Posterior cingulate gyrus (tissue), 11 donors: ENCODE measurements at regions of chr1 and their contacts with region 1.

Region 1: DNA sequence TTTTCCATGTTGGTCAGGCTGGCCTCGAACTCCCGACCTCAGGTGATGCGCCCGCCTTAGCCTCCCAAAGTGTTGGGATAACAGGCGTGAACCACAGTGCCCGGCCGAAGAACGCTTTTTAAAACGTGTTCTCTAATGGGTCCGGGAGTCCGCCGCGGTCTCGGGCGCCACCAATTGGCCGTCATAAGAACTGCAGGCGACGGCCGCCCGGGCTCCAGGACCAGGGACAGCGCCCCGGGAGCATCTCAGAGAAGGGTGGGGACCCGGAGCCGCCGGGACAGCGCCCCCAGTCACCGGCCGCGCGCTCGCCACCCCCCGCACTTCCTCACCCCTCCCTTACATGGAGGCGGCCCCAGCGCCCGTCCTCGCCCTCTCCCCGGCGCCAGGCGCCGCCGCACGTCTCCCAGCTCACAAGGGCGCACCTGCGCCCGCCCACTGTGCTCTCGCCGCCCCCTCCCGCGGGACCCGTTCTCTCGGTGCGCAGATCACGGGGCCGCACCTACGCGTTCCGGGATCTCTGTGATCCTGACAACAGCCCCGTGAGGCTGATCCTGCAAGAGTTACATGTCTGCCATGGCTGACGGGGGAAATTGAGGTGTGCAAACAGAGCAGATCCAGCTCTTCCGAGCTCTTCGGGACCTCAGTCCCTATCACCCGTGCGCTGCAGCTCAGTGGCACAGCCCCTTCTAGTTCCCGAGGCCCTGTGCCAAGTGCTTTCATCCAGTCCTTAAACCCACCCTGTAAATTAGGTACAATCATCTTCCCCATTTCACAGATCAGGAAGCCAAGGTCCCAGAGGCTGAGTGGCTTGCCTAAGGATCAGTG is 9.8 kb downstream of the RAP1GAP start:
- DNase-seq: peak in 9 of 10 donors; percentile 72 to 97 (median 82)

Region 2: GRCh38 chr1:21232044-21232443 is 427.3 kb before region 1 on chr1:
- intact Hi-C with region 1: loop called (anchors 2 kb)
- DNase-seq: peak in 6 of 10 donors; percentile 24 to 64 (median 36)

Region 3: DNA sequence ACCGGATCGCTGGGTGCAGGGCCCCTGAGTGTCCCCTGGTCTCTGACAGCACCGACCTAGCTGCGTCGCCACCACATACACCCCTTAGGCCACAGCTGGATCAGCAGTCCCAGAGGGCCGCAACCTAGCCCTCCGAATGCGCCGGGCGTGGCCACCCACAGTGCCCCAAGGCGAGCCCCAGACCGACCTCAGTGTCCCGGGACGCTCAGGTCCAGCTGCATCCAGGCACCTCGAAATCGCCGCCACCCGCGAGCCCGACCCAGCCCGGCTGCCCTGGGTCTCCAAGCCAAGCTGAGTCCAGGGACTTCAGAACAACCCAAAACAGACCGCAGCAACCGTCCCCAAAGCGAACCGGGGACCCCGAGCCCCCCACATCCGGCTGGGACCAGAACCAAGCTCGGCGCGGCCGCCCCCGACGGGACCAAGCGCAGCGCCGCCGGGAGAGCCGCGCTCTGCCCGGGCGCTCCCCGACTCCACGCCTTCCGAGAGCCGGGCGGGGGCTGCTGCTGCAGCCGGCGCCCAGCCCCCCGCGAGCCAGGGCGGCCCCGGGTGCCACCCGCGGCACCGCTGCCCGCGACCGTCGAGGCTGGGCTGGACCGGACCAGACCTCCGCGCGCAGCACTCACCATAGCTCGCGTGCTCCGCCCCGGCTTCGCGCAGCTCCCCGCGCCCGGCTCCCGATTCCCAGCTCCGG is 314.4 kb before region 1 on chr1:
- intact Hi-C with region 1: loop called (anchors 10 kb)
- DNase-seq: peak in 1 of 10 donors; percentile 37

Region 4: DNA sequence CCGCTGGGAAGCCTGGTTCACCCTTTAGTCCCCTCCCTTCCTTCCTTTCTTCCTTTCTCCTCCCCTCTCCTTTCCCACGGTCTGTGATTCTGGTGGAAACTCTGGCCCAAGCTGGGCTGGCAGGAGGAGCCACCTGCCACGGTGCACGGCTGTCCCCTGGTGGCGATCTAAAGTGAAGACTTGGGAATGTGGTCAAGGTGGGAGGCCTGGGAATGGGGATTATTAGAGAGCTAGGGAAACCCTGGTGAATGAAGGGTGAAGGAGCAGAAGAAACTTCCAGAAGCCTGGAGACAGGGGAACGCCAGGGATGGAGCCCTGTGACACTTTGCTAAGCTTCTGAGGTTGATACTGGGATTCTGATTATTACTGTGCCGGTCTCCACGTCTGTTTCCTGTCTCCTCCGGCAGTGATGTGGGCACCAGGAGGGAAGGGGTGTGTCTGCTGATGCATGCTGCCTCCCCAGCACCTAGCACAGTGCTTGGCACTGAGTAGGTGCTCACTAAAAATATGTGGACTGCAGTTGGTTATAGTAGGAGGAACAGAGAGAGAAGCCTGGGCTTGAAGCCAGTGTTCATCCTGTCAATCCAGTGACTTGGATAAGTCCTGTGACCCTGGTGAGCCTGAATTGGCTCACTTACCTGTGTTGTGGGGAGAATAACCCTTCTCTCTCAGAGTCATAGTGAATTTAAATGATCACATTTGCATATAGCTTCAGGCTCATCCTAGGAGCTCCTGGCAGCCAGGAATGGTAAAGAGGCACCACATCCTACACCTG is 290.6 kb before region 1 on chr1:
- intact Hi-C with region 1: loop called (anchors 1 kb)
- DNase-seq: peak; percentile 66 to 98 (median 84)

Region 5: GRCh38 chr1:21478974-21479373 is 180.3 kb before region 1 on chr1:
- intact Hi-C with region 1: no loop called
- DNase-seq: no peak

Region 6: GRCh38 chr1:21508580-21509350 is 150.5 kb before region 1 on chr1:
- intact Hi-C with region 1: loop called (anchors 1 kb)
- DNase-seq: peak in 7 of 10 donors; percentile 34 to 91 (median 51)

Region 7: GRCh38 chr1:21647431-21648351 is 11.6 kb before region 1 on chr1:
- intact Hi-C with region 1: no loop called
- DNase-seq: peak in 1 of 10 donors; percentile 35

Region 8: GRCh38 chr1:21963477-21964217 is 304.3 kb after region 1 on chr1:
- intact Hi-C with region 1: loop called (anchors 5 kb)
- DNase-seq: peak; percentile 50 to 96 (median 80)